ENCODE measurements at regions of chr10 and their contacts with region 1.

Region 1: GRCh38 chr10:48251525-48252353 is 22.8 kb downstream of the FRMPD2 start:
- DNase-seq: peak; percentile 43
- ATAC-seq: peak; percentile 44
- H3K4me3 ChIP-seq: no peak overlapping the region
- H3K27ac ChIP-seq: no peak overlapping the region
- H3K4me1 ChIP-seq: peaks cover 28% of the 10 kb centered on the region
- H3K27me3 ChIP-seq: no peaks in the 10 kb centered on the region
- CTCF ChIP-seq: no peak

Region 2: GRCh38 chr10:48274636-48275035 is 22.9 kb after region 1 on chr10 and contains the start of gene FRMPD2:
- CTCF ChIA-PET with region 1: no interaction called
- POLR2A ChIA-PET with region 1: no interaction called
- intact Hi-C with region 1: loop called (anchors 2 kb)
- DNase-seq: no peak
- ATAC-seq: no peak
- H3K4me3 ChIP-seq: no peak within 1 kb of the TSS
- H3K27ac ChIP-seq: no peak within 1 kb of the TSS
- H3K4me1 ChIP-seq: peaks cover 4% of the 10 kb centered on the region
- H3K27me3 ChIP-seq: no peaks in the 10 kb centered on the region
- CTCF ChIP-seq: no peak
- total RNA-seq, gene FRMPD2: 0.11 and 0.35 TPM in 2 replicates

Measured in PC-3 (cell line).